ENCODE measurements at regions of chr11 and their contacts with region 1.

Region 1: DNA sequence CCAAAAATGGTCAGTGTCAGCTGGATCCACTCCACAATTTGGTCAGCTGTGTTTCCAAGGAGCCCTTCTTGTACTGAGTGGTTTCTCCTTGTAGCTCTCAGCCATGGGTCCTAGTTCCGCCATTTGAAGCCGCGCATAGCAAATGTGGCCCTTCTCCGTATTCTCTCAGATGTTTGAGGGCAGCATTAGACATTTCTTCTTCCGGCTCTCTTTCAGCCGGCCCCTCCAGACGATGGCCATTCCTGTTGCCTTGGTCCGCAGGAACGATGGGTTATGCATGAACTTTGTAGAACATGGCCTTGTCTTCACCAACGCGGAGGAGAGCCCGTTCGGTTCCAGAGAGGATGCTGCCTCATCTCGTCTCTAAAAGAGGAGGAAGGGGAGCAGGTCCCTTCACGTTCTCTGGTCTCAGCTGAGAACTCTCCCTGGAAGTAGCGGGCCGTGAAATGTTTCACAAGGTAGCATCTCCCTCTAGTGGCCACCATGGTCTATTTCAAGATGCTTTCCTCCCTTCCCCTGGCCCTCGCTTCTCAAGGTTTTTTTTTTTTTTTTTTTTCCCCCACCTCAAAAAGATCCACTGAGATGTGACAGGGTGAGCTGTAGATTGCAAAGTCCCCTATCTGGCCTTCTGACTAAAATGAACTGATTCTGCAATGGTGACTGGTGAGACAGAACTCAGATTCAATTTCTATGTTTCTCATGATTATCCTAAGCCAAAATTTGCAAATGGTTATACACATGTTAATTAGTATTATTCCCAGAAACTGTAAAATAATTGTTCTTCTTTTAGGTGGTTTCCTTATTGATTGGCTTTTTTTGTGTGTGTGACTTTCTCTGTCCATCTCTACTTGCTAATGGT is 19.8 kb upstream of the PLET1 start:
- DNase-seq: peak; percentile 65
- ATAC-seq: peak; percentile 87
- H3K4me3 ChIP-seq: no peak overlapping the region
- H3K27ac ChIP-seq: no peak overlapping the region
- H3K4me1 ChIP-seq: peaks cover 0 to 5% of the 10 kb centered on the region in 2 experiments; a peak in 2 of 4 replicates
- H3K27me3 ChIP-seq: no peaks in the 10 kb centered on the region
- CTCF ChIP-seq: peak; percentile 74 to 77 (median 74); a peak in 5 of 6 replicates
- POLR2A ChIP-seq: no peak
- RAD21 ChIP-seq: peak; percentile 75

Region 2: GRCh38 chr11:110921742-110922521 is 1358.6 kb before region 1 on chr11:
- CTCF ChIA-PET with region 1: no interaction called
- POLR2A ChIA-PET with region 1: no interaction called
- RAD21 ChIA-PET with region 1: no interaction called
- intact Hi-C with region 1: no loop called
- DNase-seq: no peak
- ATAC-seq: no peak
- H3K4me3 ChIP-seq: no peak overlapping the region
- H3K27ac ChIP-seq: no peak overlapping the region
- H3K4me1 ChIP-seq: no peaks in the 10 kb centered on the region
- H3K27me3 ChIP-seq: 0 out of 2 replicates have a peak, but pooled peaks cover 4% of the 10 kb centered on the region
- CTCF ChIP-seq: no peak
- POLR2A ChIP-seq: no peak
- RAD21 ChIP-seq: no peak

Region 3: DNA sequence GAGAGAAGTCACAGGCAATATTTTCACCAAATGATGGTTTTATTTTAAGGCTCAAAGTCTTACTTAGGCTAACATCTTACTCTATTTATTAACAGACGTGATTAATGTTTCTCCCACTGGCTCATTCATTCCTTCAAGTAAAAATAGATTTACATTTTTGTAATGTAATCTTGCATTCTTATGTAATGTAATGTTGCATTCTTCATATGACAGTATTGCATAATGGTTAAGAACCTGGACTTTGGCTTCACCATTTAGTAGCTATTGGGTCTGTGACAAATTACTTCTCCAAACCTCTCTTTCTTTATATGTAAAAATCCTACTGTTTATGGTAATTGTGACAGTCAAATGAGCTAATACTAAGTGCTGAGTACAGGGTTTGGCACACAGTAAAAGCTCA is 346.6 kb before region 1 on chr11:
- CTCF ChIA-PET with region 1: interaction called, 7 read pairs
- POLR2A ChIA-PET with region 1: no interaction called
- RAD21 ChIA-PET with region 1: interaction called in 1 of 2 experiments, 3 read pairs
- intact Hi-C with region 1: loop called (anchors 1 kb)
- DNase-seq: no peak
- ATAC-seq: no peak
- H3K4me3 ChIP-seq: no peak overlapping the region
- H3K27ac ChIP-seq: no peak overlapping the region
- H3K4me1 ChIP-seq: peaks cover 18 to 31% of the 10 kb centered on the region in 2 experiments; a peak in 3 of 4 replicates
- H3K27me3 ChIP-seq: no peaks in the 10 kb centered on the region
- CTCF ChIP-seq: no peak
- POLR2A ChIP-seq: no peak
- RAD21 ChIP-seq: no peak

Region 4: DNA sequence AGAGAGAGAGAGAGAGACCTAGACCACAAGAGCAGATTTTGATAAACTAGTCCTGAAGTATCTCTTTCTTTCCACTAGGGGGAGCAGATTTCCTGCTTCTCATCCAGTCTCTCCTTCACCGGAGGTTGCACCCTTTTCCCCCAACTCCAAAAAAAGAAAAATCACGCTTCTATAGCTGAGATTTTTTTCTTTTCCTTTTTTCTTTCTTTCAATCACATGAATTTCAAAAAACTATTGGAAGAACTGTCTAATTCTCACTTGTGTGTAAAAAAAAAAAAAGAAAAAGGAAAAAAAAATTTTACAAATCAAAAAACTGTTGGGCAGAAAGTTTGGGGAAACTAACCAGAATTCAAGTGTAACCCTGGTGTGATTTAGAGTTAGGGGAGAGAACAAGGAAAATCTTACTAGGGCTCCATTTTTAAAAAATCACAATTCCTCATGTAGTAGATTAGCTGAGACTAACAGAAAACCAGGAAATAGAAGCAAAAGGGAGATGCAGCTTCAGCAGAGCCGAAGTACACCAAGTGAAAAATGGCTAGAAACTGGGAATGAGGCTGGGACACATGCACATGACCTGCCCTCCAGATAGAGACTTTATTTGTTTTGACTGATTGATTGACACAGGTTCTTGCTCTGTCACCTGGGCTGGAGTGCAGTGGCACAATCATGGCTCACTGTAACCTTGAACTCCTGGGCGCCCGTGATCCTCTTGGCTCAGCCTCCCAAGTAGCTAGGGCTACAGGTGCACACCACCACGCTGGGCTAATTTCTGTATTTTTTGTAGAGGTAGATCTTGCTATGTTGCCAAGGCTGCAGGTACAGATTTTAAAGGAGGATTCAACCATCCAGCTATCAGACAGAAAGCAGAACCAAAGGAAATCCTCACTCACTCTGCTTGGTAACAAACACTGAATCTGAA is 166.7 kb before region 1 on chr11:
- CTCF ChIA-PET with region 1: interaction called, 20 read pairs
- POLR2A ChIA-PET with region 1: no interaction called
- RAD21 ChIA-PET with region 1: no interaction called
- intact Hi-C with region 1: loop called (anchors 1 kb)
- DNase-seq: peak; percentile 49
- ATAC-seq: peak; percentile 81
- H3K4me3 ChIP-seq: no peak overlapping the region
- H3K27ac ChIP-seq: no peak overlapping the region; the same call in 1 of the 2 replicates
- H3K4me1 ChIP-seq: peaks cover 21 to 33% of the 10 kb centered on the region in 2 experiments
- H3K27me3 ChIP-seq: no peaks in the 10 kb centered on the region
- CTCF ChIP-seq: peak; percentile 49 to 63 (median 63); a peak in 5 of 6 replicates
- POLR2A ChIP-seq: no peak
- RAD21 ChIP-seq: peak; percentile 84

Region 5: GRCh38 chr11:112226062-112226830 is 54.3 kb before region 1 on chr11 and contains the start of gene PTS:
- CTCF ChIA-PET with region 1: interaction called, 73 read pairs
- POLR2A ChIA-PET with region 1: interaction called, 4 read pairs
- RAD21 ChIA-PET with region 1: no interaction called
- intact Hi-C with region 1: no loop called
- DNase-seq: peak; percentile 72
- ATAC-seq: peak; percentile 96
- H3K4me3 ChIP-seq: peak within 1 kb of the TSS; percentile 71 to 85
- H3K27ac ChIP-seq: peak within 1 kb of the TSS; percentile 86
- H3K4me1 ChIP-seq: peaks cover 4 to 9% of the 10 kb centered on the region in 2 experiments
- H3K27me3 ChIP-seq: no peaks in the 10 kb centered on the region
- CTCF ChIP-seq: no peak
- POLR2A ChIP-seq: peak; percentile 85
- RAD21 ChIP-seq: no peak
- total RNA-seq, gene PTS: 45.7 TPM